HepG2 (cell line): ENCODE measurements at regions of chr14 and their contacts with region 1.

Region 1: GRCh38 chr14:100645192-100645990 is 58.2 kb upstream of the BEGAIN start:
- DNase-seq: peak; percentile 75
- ATAC-seq: peak; percentile 88
- H3K4me3 ChIP-seq: no peak overlapping the region
- H3K27ac ChIP-seq: no peak overlapping the region
- H3K4me1 ChIP-seq: peaks cover 16% of the 10 kb centered on the region
- H3K27me3 ChIP-seq: peaks cover 4 to 6% of the 10 kb centered on the region in 2 experiments; a peak in 1 of 5 replicates
- CTCF ChIP-seq: peak; percentile 93
- EP300 ChIP-seq: no peak
- POLR2A ChIP-seq: no peak
- RAD21 ChIP-seq: peak; percentile 85

Region 2: DNA sequence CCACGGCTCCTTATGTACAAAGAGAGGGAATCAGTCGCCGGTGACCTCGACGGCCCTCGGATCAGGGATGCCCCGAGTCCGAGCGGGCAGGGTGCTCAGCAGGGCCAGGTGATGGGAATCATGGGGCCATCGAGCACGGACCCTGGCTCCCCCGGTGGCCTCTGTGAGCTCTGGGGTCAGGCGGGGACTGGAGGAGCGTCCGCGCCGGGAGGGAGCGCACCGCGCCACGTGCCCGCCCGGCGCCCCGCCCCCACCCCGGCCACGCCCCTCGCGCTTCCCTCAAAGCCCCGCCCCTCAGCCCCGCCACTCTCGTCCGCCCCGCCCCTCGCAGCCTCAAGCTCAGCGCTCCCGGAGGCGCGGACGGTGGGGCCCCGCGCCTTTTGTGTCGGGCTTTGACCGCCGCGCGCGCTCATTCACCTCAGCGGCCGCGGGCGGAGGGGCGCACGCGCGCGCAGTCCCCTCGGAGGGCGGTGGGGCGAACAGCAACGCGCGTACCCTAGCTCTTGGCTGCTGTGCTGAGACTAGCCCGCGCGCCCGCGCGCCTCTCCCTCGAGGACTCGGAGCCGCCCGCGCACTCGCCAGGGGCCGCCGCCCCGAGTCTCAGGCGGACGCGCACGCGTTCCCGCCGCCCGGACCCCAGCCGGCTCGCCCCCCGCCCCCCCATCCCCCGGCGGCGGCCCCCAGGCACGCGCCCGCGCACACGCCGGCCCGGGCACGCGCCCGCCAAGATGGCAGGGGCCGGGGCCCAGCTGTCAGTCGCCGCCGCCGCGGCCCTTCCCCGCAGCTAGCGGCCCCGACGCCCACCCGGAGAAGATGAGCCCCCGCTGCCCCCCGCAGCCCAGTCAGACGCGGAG is 674.1 kb before region 1 on chr14:
- CTCF ChIA-PET with region 1: no interaction called
- POLR2A ChIA-PET with region 1: no interaction called
- in situ Hi-C with region 1: no loop called
- intact Hi-C with region 1: no loop called
- DNase-seq: peak; percentile 78
- ATAC-seq: peak; percentile 81
- H3K4me3 ChIP-seq: peak overlapping the region; percentile 52 to 92 (median 90); a peak in 5 of 6 replicates
- H3K27ac ChIP-seq: peak overlapping the region; percentile 77
- H3K4me1 ChIP-seq: peaks cover 46% of the 10 kb centered on the region
- H3K27me3 ChIP-seq: peaks cover 0 to 39% of the 10 kb centered on the region in 2 experiments; a peak in 4 of 5 replicates
- CTCF ChIP-seq: no peak
- EP300 ChIP-seq: no peak
- POLR2A ChIP-seq: peak; percentile 73 to 74
- RAD21 ChIP-seq: no peak

Region 3: GRCh38 chr14:100383727-100384158 is 261.6 kb before region 1 on chr14:
- CTCF ChIA-PET with region 1: interaction called, 13 read pairs
- POLR2A ChIA-PET with region 1: interaction called, 4 read pairs
- in situ Hi-C with region 1: loop called (anchors 5 kb)
- intact Hi-C with region 1: loop called (anchors 1 kb)
- DNase-seq: peak; percentile 58
- ATAC-seq: peak; percentile 96
- H3K4me3 ChIP-seq: peak overlapping the region in 1 of 3 experiments; percentile 25; a peak in 1 of 6 replicates
- H3K27ac ChIP-seq: no peak overlapping the region
- H3K4me1 ChIP-seq: peaks cover 8% of the 10 kb centered on the region
- H3K27me3 ChIP-seq: no peaks in the 10 kb centered on the region
- CTCF ChIP-seq: peak; percentile 95
- EP300 ChIP-seq: no peak
- POLR2A ChIP-seq: no peak
- RAD21 ChIP-seq: peak; percentile 83

Region 4: DNA sequence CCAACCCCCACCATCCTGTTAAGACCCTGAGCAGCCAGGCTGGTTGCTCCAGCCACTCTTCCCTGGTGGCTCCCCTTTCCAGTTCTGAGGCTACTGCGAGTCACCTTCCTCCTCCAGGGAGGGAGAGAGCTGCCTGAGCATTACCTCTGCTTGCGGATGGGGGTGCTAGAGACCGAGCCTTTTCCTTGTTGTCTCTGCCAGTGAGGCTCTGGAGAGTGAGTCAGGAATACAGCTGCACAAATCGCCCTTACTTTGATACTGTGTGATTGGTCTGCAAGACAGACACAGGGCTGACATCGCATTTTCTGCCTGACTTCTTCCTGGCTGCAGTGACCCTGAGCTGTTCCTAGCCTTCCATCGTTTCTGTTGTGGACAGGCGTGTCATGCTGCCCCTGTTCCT is 227.9 kb before region 1 on chr14:
- CTCF ChIA-PET with region 1: interaction called, 12 read pairs
- POLR2A ChIA-PET with region 1: interaction called, 4 read pairs
- in situ Hi-C with region 1: loop called (anchors 5 kb)
- intact Hi-C with region 1: loop called (anchors 1 kb)
- DNase-seq: peak; percentile 55
- ATAC-seq: peak; percentile 98
- H3K4me3 ChIP-seq: no peak overlapping the region
- H3K27ac ChIP-seq: no peak overlapping the region
- H3K4me1 ChIP-seq: no peaks in the 10 kb centered on the region
- H3K27me3 ChIP-seq: no peaks in the 10 kb centered on the region
- CTCF ChIP-seq: peak; percentile 83
- EP300 ChIP-seq: no peak
- POLR2A ChIP-seq: no peak
- RAD21 ChIP-seq: peak; percentile 78

Region 5: GRCh38 chr14:100424504-100425418 is 220.6 kb before region 1 on chr14:
- CTCF ChIA-PET with region 1: no interaction called
- POLR2A ChIA-PET with region 1: no interaction called
- in situ Hi-C with region 1: loop called (anchors 5 kb)
- intact Hi-C with region 1: no loop called
- DNase-seq: no peak
- ATAC-seq: no peak
- H3K4me3 ChIP-seq: no peak overlapping the region
- H3K27ac ChIP-seq: no peak overlapping the region
- H3K4me1 ChIP-seq: peaks cover 14% of the 10 kb centered on the region
- H3K27me3 ChIP-seq: no peaks in the 10 kb centered on the region
- CTCF ChIP-seq: no peak
- EP300 ChIP-seq: no peak
- POLR2A ChIP-seq: no peak
- RAD21 ChIP-seq: no peak

Region 6: DNA sequence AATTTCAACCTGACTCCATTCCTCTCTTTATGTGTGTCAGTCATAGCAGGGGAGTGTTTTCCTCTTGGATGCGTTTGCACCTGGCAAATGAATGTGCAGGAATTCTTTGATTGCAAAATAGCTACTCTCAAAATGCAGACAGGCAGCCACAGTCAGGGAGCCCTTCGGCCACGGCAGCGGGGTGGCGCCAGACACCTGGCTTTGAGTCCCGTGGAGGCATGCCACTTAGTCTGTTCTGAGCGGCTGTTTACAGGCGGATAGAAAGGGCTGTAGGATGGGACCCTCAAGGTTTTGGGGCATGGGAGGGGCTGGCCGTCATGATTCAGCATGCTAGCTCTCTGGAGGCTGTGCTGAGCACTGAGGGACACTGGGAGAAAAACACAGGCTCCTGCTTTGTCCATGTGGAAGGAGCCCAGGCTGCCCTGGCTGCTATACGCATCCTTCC is 205.2 kb before region 1 on chr14:
- CTCF ChIA-PET with region 1: interaction called, 15 read pairs
- POLR2A ChIA-PET with region 1: no interaction called
- in situ Hi-C with region 1: no loop called
- intact Hi-C with region 1: loop called (anchors 1 kb)
- DNase-seq: peak; percentile 73
- ATAC-seq: peak; percentile 98
- H3K4me3 ChIP-seq: no peak overlapping the region
- H3K27ac ChIP-seq: no peak overlapping the region
- H3K4me1 ChIP-seq: peaks cover 23% of the 10 kb centered on the region
- H3K27me3 ChIP-seq: no peaks in the 10 kb centered on the region
- CTCF ChIP-seq: peak; percentile 94
- EP300 ChIP-seq: no peak
- POLR2A ChIP-seq: no peak
- RAD21 ChIP-seq: peak; percentile 95

Region 7: DNA sequence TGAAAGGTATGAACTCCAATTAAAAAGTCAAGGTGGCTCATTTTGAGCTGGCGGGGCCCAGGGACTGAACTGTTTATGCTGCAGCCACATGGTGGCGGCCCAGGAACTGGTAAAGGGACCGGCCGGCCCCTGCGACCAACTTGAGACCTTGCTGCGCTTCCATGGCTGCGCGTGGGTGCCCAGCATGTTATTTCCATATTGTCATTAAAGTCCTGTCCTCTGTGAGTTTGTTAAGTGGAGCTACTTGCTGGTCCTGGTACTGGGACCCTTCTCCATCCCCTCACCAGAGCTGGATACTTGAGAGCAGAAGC is 120.5 kb before region 1 on chr14:
- CTCF ChIA-PET with region 1: interaction called, 5 read pairs
- POLR2A ChIA-PET with region 1: no interaction called
- in situ Hi-C with region 1: loop called (anchors 5 kb)
- intact Hi-C with region 1: loop called (anchors 2 kb)
- DNase-seq: no peak
- ATAC-seq: peak; percentile 56; the same call in 2 of the 3 replicates
- H3K4me3 ChIP-seq: no peak overlapping the region
- H3K27ac ChIP-seq: no peak overlapping the region
- H3K4me1 ChIP-seq: no peaks in the 10 kb centered on the region
- H3K27me3 ChIP-seq: no peaks in the 10 kb centered on the region
- CTCF ChIP-seq: peak; percentile 67
- EP300 ChIP-seq: no peak
- POLR2A ChIP-seq: no peak
- RAD21 ChIP-seq: peak; percentile 53; the same call in 1 of the 2 replicates

Region 8: GRCh38 chr14:100533656-100534485 is 111.5 kb before region 1 on chr14:
- CTCF ChIA-PET with region 1: no interaction called
- POLR2A ChIA-PET with region 1: no interaction called
- in situ Hi-C with region 1: loop called (anchors 5 kb)
- intact Hi-C with region 1: no loop called
- DNase-seq: no peak
- ATAC-seq: peak; percentile 50
- H3K4me3 ChIP-seq: no peak overlapping the region
- H3K27ac ChIP-seq: no peak overlapping the region
- H3K4me1 ChIP-seq: peaks cover 21% of the 10 kb centered on the region
- H3K27me3 ChIP-seq: peaks cover 0 to 4% of the 10 kb centered on the region in 2 experiments; a peak in 1 of 5 replicates
- CTCF ChIP-seq: no peak
- EP300 ChIP-seq: no peak
- POLR2A ChIP-seq: no peak
- RAD21 ChIP-seq: no peak